Gastrocnemius medialis (tissue), 4 donors: ENCODE measurements at regions of chr7 and their contacts with region 1.

Region 1: GRCh38 chr7:64241162-64241561 is 12.9 kb downstream of the ZNF679 start:
- DNase-seq: no peak
- ATAC-seq: no peak
- H3K4me3 ChIP-seq: no peak overlapping the region
- H3K27ac ChIP-seq: no peak overlapping the region
- H3K4me1 ChIP-seq: no peaks in the 10 kb centered on the region
- H3K27me3 ChIP-seq: no peaks in the 10 kb centered on the region
- CTCF ChIP-seq: no peak
- POLR2A ChIP-seq: no peak

Region 2: GRCh38 chr7:64320547-64321513 is 79.7 kb after region 1 on chr7:
- in situ Hi-C with region 1: loop called in 1 of 4 experiments (anchors 25 kb)
- intact Hi-C with region 1: no loop called
- DNase-seq: no peak
- ATAC-seq: no peak
- H3K4me3 ChIP-seq: no peak overlapping the region
- H3K27ac ChIP-seq: no peak overlapping the region
- H3K4me1 ChIP-seq: no peaks in the 10 kb centered on the region
- H3K27me3 ChIP-seq: no peaks in the 10 kb centered on the region
- CTCF ChIP-seq: no peak
- POLR2A ChIP-seq: no peak

Region 3: GRCh38 chr7:64625114-64626082 is 384.2 kb after region 1 on chr7:
- in situ Hi-C with region 1: no loop called
- intact Hi-C with region 1: no loop called
- DNase-seq: no peak
- ATAC-seq: no peak
- H3K4me3 ChIP-seq: no peak overlapping the region
- H3K27ac ChIP-seq: no peak overlapping the region
- H3K4me1 ChIP-seq: no peaks in the 10 kb centered on the region
- H3K27me3 ChIP-seq: no peaks in the 10 kb centered on the region
- CTCF ChIP-seq: peak; percentile 57 to 78 (median 60)
- POLR2A ChIP-seq: no peak